Mammary epithelial cell (primary cell): ENCODE measurements at regions of chr12 and their contacts with region 1.

Region 1: GRCh38 chr12:107296681-107297089 is 203.3 kb upstream of the CRY1 start:
- DNase-seq: peak; percentile 97
- H3K4me3 ChIP-seq: peak overlapping the region in 1 of 3 experiments; percentile 10
- H3K27ac ChIP-seq: peak overlapping the region; percentile 77
- H3K4me1 ChIP-seq: peaks cover 25% of the 10 kb centered on the region
- H3K27me3 ChIP-seq: no peaks in the 10 kb centered on the region
- CTCF ChIP-seq: no peak

Region 2: DNA sequence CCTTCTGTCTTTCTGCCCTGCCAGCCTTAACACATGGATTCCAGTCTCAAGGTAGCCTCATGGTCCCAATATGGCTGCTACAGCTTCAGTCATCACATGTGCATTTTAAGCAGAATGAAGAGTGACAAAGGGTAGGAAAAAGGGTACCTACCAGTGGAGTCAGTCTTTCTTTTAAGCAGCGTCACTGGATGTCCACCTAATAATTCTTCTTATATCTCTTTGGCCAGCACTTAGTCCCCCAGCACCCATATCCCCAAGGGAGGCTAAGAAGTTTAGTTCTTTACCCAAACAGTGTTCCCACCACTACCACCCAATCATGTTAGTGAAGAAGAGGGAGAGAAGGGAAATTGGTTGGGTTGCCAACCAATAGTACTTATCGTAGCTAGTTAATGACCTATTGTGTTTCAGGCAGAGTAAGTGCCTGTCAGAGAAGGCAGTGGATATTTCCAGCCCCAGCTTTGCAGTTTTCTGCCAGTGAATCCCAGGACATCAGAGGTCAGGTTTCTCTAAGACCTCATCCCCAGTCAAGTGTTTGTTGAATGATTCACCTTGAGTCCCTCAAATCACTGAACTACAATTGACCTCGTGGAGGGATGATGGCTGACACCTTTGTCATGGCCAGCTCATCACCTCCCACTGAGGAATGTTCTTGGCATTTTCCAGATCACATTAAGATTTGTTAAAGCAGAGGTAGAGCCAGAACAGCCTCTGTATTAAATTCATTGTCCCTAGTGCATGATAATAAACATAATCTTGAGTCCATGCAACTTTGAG is 47.5 kb after region 1 on chr12:
- CTCF ChIA-PET with region 1: no interaction called
- dilution Hi-C with region 1: no loop called
- in situ Hi-C with region 1: no loop called
- intact Hi-C with region 1: loop called (anchors 2 kb)
- DNase-seq: peak; percentile 91
- H3K4me3 ChIP-seq: no peak overlapping the region
- H3K27ac ChIP-seq: peak overlapping the region; percentile 54
- H3K4me1 ChIP-seq: peaks cover 32% of the 10 kb centered on the region
- H3K27me3 ChIP-seq: no peaks in the 10 kb centered on the region
- CTCF ChIP-seq: no peak

Region 3: GRCh38 chr12:107356266-107356936 is 59.7 kb after region 1 on chr12:
- CTCF ChIA-PET with region 1: no interaction called
- dilution Hi-C with region 1: no loop called
- in situ Hi-C with region 1: no loop called
- intact Hi-C with region 1: no loop called
- DNase-seq: peak; percentile 79
- H3K4me3 ChIP-seq: no peak overlapping the region
- H3K27ac ChIP-seq: no peak overlapping the region
- H3K4me1 ChIP-seq: peaks cover 46% of the 10 kb centered on the region
- H3K27me3 ChIP-seq: no peaks in the 10 kb centered on the region
- CTCF ChIP-seq: no peak